SK-N-SH (cell line): ENCODE measurements at regions of chr11 and their contacts with region 1.

Region 1: DNA sequence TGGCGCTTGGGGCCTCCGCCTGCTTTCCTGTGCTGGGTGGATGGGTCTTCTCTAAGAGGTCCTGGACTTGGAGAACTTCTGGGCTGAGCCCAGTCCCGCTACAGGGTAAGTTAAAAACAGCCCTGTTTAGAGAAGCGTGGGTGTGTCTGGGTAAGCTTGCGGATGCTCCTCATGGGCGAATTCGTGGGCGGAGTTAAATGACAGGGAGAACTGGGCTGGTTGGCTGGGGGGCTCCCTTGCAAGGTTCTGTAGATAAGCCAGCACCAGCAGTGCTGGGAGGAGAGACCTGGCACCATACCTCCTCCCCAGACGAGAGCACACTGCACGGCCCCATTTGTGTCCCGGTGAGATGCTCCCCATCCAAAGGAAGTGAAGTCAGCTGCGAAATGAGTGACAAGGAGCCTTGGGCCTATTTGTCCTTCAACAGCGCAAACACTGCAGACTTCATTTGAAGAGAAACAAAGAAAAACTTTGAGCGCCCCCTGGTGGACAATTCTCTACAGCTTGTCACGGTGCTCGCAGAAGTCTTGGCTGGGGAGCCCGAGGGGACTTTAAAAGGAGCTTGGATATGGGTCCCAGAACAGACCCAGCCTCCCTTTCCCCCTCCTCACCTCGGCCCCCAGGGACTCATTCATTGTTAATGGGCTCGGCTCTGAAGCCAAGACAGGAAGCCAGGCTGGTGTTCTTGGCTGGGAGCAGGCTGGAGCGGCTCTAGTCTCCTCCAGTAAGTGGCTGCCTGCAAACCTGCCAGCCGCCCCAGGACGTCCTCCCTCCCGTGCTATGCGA is 39.5 kb downstream of the TP53I11 start:
- DNase-seq: peak; percentile 83
- H3K4me3 ChIP-seq: no peak overlapping the region; a peak in 1 of 4 replicates
- H3K27ac ChIP-seq: no peak overlapping the region; a peak in 1 of 4 replicates
- H3K4me1 ChIP-seq: peaks cover 0 to 10% of the 10 kb centered on the region in 2 experiments; a peak in 1 of 4 replicates
- H3K27me3 ChIP-seq: 0 out of 2 replicates have a peak, but pooled peaks cover 5% of the 10 kb centered on the region
- CTCF ChIP-seq: peak; percentile 87
- EP300 ChIP-seq: no peak
- RAD21 ChIP-seq: peak; percentile 83

Region 2: GRCh38 chr11:44351898-44352498 is 559.2 kb before region 1 on chr11:
- CTCF ChIA-PET with region 1: no interaction called
- POLR2A ChIA-PET with region 1: no interaction called
- DNase-seq: peak; percentile 43
- H3K4me3 ChIP-seq: no peak overlapping the region
- H3K27ac ChIP-seq: no peak overlapping the region
- H3K4me1 ChIP-seq: peaks cover 0 to 12% of the 10 kb centered on the region in 2 experiments; a peak in 1 of 4 replicates
- H3K27me3 ChIP-seq: peaks cover 4% of the 10 kb centered on the region; the same call in 1 of the 2 replicates
- CTCF ChIP-seq: peak; percentile 24
- EP300 ChIP-seq: no peak
- RAD21 ChIP-seq: 0 out of 2 replicates have a peak, but pooled peaks have one; percentile 24

Region 3: GRCh38 chr11:44556735-44557409 is 354.4 kb before region 1 on chr11:
- CTCF ChIA-PET with region 1: interaction called, 26 read pairs
- POLR2A ChIA-PET with region 1: no interaction called
- DNase-seq: no peak
- H3K4me3 ChIP-seq: peak overlapping the region in 1 of 2 experiments; percentile 28; a peak in 1 of 4 replicates
- H3K27ac ChIP-seq: no peak overlapping the region
- H3K4me1 ChIP-seq: peaks cover 0 to 5% of the 10 kb centered on the region in 2 experiments; a peak in 1 of 4 replicates
- H3K27me3 ChIP-seq: no peaks in the 10 kb centered on the region
- CTCF ChIP-seq: peak; percentile 91
- EP300 ChIP-seq: no peak
- RAD21 ChIP-seq: peak; percentile 85

Region 4: GRCh38 chr11:44634401-44635281 is 276.6 kb before region 1 on chr11:
- CTCF ChIA-PET with region 1: interaction called, 155 read pairs
- POLR2A ChIA-PET with region 1: no interaction called
- DNase-seq: peak; percentile 90
- H3K4me3 ChIP-seq: peak overlapping the region; percentile 1 to 10; a peak in 1 of 4 replicates
- H3K27ac ChIP-seq: peak overlapping the region in 1 of 2 experiments; percentile 80; a peak in 2 of 4 replicates
- H3K4me1 ChIP-seq: peaks cover 5 to 20% of the 10 kb centered on the region in 2 experiments; a peak in 2 of 4 replicates
- H3K27me3 ChIP-seq: peaks cover 3% of the 10 kb centered on the region; the same call in 1 of the 2 replicates
- CTCF ChIP-seq: no peak
- EP300 ChIP-seq: no peak; a peak in 1 of 4 replicates
- RAD21 ChIP-seq: no peak; the same call in 1 of the 2 replicates

Region 5: GRCh38 chr11:44727373-44728287 is 183.6 kb before region 1 on chr11:
- CTCF ChIA-PET with region 1: interaction called, 13 read pairs
- POLR2A ChIA-PET with region 1: no interaction called
- DNase-seq: peak; percentile 92
- H3K4me3 ChIP-seq: peak overlapping the region; percentile 61 to 62
- H3K27ac ChIP-seq: peak overlapping the region in 1 of 2 experiments; percentile 92; a peak in 2 of 4 replicates
- H3K4me1 ChIP-seq: peaks cover 5 to 56% of the 10 kb centered on the region in 2 experiments; a peak in 3 of 4 replicates
- H3K27me3 ChIP-seq: peaks cover 25% of the 10 kb centered on the region; the same call in 1 of the 2 replicates
- CTCF ChIP-seq: peak; percentile 80
- EP300 ChIP-seq: no peak
- RAD21 ChIP-seq: peak; percentile 85

Region 6: GRCh38 chr11:44766112-44766971 is 144.9 kb before region 1 on chr11:
- CTCF ChIA-PET with region 1: interaction called, 14 read pairs
- POLR2A ChIA-PET with region 1: no interaction called
- DNase-seq: peak; percentile 76
- H3K4me3 ChIP-seq: no peak overlapping the region
- H3K27ac ChIP-seq: peak overlapping the region; percentile 76 to 99
- H3K4me1 ChIP-seq: peaks cover 44 to 74% of the 10 kb centered on the region in 2 experiments
- H3K27me3 ChIP-seq: no peaks in the 10 kb centered on the region
- CTCF ChIP-seq: no peak
- EP300 ChIP-seq: peak; percentile 51 to 90
- RAD21 ChIP-seq: peak; percentile 18; the same call in 1 of the 2 replicates